Activated naive CD4-positive, alpha-beta T cell treated with anti-CD3 and anti-CD28 coated beads for 36 hours (primary cell): ENCODE measurements at regions of chrX and their contacts with region 1.

Region 1: GRCh38 chrX:15789979-15790768 is at the start of gene ZRSR2:
- DNase-seq: peak; percentile 88
- H3K4me3 Mint-ChIP-seq: no peak within 1 kb of the TSS
- H3K27ac Mint-ChIP-seq: no peak within 1 kb of the TSS
- H3K4me1 Mint-ChIP-seq: peaks cover 16% of the 10 kb centered on the region
- H3K27me3 Mint-ChIP-seq: no peaks in the 10 kb centered on the region
- total RNA-seq, gene ZRSR2: 15.7 to 16.7 TPM

Region 2: GRCh38 chrX:15674841-15675489 is 115.2 kb before region 1 on chrX:
- CTCF ChIA-PET with region 1: no interaction called
- intact Hi-C with region 1: loop called (anchors 1 kb)
- DNase-seq: peak; percentile 85
- H3K4me3 Mint-ChIP-seq: no peak overlapping the region
- H3K27ac Mint-ChIP-seq: no peak overlapping the region
- H3K4me1 Mint-ChIP-seq: peaks cover 21% of the 10 kb centered on the region
- H3K27me3 Mint-ChIP-seq: no peaks in the 10 kb centered on the region

Region 3: DNA sequence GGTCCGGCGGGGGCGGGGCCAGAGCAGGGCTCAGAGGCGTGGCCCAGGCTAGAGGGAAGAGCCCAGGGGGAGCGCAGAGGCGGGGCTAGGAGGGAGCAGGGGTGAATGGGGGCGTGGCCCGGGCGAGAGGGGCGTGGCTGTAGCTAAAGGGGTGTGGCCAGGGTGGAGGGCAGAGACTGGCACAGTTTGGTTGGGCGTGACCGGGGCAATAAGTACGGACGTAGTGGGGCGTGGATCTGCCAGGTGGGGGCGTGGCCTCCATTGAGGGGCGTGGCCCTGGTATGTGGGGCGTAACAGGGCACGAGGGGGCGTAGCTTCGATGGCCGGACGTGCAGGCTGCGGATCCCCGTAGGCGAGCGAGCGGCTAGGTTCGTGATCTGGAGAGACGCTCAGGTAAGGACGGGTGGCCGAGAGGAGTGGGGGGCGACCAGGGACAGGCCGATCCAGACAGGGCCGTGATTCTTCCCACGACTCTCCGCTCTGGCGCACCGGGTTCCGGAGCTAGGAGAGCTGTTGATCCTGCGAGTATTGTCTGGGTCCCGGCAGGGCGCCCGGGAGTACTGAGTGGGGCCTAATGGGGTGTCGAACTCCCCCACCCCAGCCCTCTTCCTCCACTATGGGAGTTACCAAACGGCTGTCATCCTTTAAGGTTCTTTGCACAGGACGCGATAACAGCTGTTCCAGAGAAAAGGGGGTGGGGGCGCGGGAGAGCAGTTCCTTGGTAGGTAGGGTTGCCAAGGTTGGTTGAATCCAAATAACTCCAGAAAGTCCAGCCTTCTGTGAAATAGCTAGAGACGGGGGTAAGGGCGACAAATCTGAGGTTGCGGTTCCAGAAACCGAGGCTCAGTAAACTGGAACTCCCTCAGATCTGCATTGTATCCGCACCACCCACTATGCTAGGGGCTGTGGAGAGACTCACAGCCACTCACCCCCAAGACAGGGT is 51.9 kb before region 1 on chrX and contains the start of gene CA5B:
- CTCF ChIA-PET with region 1: no interaction called
- intact Hi-C with region 1: loop called (anchors 1 kb)
- DNase-seq: peak; percentile 96
- H3K4me3 Mint-ChIP-seq: peak within 1 kb of the TSS; percentile 83
- H3K27ac Mint-ChIP-seq: no peak within 1 kb of the TSS
- H3K4me1 Mint-ChIP-seq: peaks cover 37% of the 10 kb centered on the region
- H3K27me3 Mint-ChIP-seq: no peaks in the 10 kb centered on the region
- total RNA-seq, gene CA5B: 7.0 to 9.5 TPM

Region 4: DNA sequence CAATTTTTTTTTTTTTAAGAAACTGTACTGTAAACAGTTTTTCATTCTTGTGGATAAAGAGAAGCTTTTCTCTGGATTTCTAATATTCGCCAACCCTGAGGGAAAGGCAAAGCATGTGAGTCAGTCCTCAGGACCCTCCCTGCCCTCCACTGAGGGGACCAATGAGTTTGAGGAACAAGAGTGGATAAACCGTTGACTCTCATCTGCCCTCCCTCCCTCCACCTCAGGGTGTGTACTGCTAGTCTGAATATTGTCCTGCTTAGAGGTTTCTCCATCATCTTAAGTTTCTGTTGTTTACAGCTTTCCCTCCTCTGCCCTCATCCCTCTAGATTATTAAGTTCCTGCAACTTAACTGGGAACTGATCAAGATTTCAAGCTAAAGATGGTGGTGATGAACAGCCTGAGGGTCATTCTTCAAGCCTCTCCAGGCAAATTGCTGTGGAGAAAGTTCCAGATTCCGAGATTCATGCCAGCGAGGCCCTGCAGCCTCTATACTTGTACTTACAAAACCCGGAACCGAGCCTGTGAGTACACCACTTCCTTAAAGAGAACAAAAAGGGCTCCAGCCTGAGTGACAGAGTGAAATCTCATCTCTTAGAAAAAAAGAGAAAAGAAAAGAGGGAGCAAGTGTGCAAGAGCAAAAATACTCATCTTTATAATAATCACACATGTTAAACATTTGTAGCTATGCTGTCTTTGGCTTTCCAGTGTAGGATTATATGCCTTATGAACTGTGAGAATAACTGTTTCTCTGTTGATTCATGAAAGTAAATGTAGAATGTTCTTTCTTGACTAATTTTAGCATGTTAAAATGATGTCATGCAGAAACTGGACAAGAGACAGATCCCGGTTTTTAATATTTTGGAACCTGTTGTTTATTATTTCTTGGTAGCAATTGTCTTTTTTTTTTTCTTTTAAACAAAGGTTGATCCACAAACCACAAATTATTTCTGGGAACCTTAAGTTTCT is 40.2 kb before region 1 on chrX:
- CTCF ChIA-PET with region 1: interaction called, 4 read pairs
- intact Hi-C with region 1: loop called (anchors 5 kb)
- DNase-seq: peak; percentile 31
- H3K4me3 Mint-ChIP-seq: peak overlapping the region; percentile 47
- H3K27ac Mint-ChIP-seq: peak overlapping the region; percentile 92
- H3K4me1 Mint-ChIP-seq: peaks cover 68% of the 10 kb centered on the region
- H3K27me3 Mint-ChIP-seq: no peaks in the 10 kb centered on the region

Region 5: DNA sequence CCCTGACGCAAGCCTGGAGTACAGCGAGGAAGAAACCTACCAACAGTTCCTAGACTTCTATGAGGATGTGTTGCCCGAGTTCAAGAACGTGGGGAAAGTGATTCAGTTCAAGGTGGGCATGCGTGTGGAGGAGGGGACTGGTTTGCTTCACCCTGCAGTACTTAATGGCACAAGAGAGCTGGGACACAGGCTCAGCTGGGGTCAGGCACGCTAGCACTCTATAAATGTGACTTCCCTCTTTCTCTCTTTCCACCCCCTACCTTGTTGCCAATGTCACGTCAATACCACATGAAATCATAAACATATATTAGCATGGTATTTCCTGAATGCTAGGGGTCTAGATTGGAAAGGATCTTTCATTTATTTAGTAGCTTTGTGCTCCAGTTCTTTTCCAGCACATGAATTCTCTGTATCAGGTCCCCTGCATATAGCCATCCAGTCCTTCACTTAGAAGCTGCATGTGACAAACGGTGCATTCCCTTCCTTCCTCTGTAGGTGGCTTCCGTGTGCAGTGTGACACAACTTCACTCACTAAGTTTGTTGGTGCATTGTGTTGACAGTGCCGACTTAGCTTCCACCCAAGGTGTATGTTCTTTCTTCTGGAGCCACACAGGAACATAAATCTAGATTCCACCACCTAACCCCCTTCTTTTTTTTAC is 25.7 kb after region 1 on chrX:
- CTCF ChIA-PET with region 1: no interaction called
- intact Hi-C with region 1: loop called (anchors 2 kb)
- DNase-seq: peak; percentile 49
- H3K4me3 Mint-ChIP-seq: no peak overlapping the region
- H3K27ac Mint-ChIP-seq: peak overlapping the region; percentile 78
- H3K4me1 Mint-ChIP-seq: peaks cover 40% of the 10 kb centered on the region
- H3K27me3 Mint-ChIP-seq: no peaks in the 10 kb centered on the region

Region 6: GRCh38 chrX:16719334-16720084 is 929.3 kb after region 1 on chrX and contains the start of gene SYAP1:
- CTCF ChIA-PET with region 1: no interaction called
- intact Hi-C with region 1: loop called (anchors 1 kb)
- DNase-seq: peak; percentile 93
- H3K4me3 Mint-ChIP-seq: peak within 1 kb of the TSS; percentile 89
- H3K27ac Mint-ChIP-seq: peak within 1 kb of the TSS; percentile 92
- H3K4me1 Mint-ChIP-seq: peaks cover 33% of the 10 kb centered on the region
- H3K27me3 Mint-ChIP-seq: no peaks in the 10 kb centered on the region
- total RNA-seq, gene SYAP1: 17.1 to 18.9 TPM